ENCODE measurements at regions of chr5 and their contacts with region 1.

Region 1: GRCh38 chr5:145463635-145464034 is 371.5 kb downstream of the PRELID2 start:
- DNase-seq: no peak
- ATAC-seq: peak in 2 of 4 donors; percentile 31 to 61
- H3K4me3 ChIP-seq: no peak overlapping the region
- H3K27ac ChIP-seq: no peak overlapping the region
- H3K4me1 ChIP-seq: no peaks in the 10 kb centered on the region
- H3K27me3 ChIP-seq: no peaks in the 10 kb centered on the region
- CTCF ChIP-seq: no peak

Region 2: GRCh38 chr5:145010834-145011233 is 452.8 kb before region 1 on chr5:
- intact Hi-C with region 1: loop called in 1 of 2 experiments (anchors 5 kb)
- DNase-seq: no peak
- ATAC-seq: no peak
- H3K4me3 ChIP-seq: no peak overlapping the region
- H3K27ac ChIP-seq: no peak overlapping the region
- H3K4me1 ChIP-seq: no peaks in the 10 kb centered on the region
- H3K27me3 ChIP-seq: no peaks in the 10 kb centered on the region
- CTCF ChIP-seq: no peak

Region 3: DNA sequence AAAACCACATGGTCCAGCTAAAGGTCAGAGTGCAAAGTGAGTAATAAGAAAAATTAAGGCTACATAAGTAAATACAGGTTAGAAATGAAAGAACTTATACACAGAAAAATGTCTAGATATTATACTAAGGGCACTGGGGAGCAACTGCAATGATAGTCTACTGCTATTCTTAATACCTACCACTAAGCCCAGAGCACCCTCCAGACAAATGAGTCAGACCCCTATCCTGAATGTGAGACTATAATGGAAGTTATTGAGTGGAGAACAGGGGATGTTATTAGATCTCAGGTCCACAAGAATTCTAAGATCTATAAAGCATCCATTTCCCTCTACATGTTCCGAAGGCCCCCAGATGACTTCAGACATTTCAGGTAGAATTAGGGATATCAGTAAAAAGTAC is 66.7 kb before region 1 on chr5:
- intact Hi-C with region 1: no loop called
- DNase-seq: no peak
- ATAC-seq: no peak
- H3K4me3 ChIP-seq: no peak overlapping the region
- H3K27ac ChIP-seq: no peak overlapping the region
- H3K4me1 ChIP-seq: no peaks in the 10 kb centered on the region
- H3K27me3 ChIP-seq: no peaks in the 10 kb centered on the region
- CTCF ChIP-seq: no peak